Dendritic cell treated with granulocyte-macrophage colony-stimulating factor and Interleukin-4, amounts not matched to agents 40 ng/mL and 50 ng/mL, for 4 days (primary cell): ENCODE measurements at regions of chr3 and their contacts with region 1.

Region 1: DNA sequence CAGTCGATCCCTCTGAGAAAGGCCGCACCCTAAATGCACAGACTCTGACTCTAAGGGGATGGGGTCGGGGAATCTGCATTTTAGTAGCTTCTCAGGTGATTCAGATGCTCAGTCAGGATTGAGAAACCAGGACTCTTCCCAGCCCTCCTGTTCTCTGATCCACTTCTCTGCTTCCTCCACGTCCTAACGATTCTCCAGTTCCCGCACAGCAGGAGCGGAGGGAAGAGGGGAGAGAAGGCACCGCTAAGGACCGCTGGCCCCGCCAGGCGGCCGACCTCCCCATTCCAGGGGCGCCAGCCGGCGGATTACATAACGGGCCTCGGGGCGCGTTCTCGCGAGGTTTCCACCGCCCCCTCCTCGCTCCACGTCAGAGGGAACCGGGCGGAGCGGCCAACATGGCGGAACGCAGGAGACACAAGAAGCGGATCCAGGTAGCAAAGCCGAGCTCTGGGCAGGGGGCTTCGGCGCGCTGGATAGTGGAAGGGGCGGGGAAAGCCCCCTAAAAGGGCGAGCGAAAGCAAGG is at the start of gene SEC62:
- H3K4me3 Mint-ChIP-seq: peak within 1 kb of the TSS; percentile 92
- H3K27ac Mint-ChIP-seq: peak within 1 kb of the TSS; percentile 96
- H3K4me1 Mint-ChIP-seq: peaks cover 44% of the 10 kb centered on the region
- H3K27me3 Mint-ChIP-seq: peaks cover 3% of the 10 kb centered on the region

Region 2: DNA sequence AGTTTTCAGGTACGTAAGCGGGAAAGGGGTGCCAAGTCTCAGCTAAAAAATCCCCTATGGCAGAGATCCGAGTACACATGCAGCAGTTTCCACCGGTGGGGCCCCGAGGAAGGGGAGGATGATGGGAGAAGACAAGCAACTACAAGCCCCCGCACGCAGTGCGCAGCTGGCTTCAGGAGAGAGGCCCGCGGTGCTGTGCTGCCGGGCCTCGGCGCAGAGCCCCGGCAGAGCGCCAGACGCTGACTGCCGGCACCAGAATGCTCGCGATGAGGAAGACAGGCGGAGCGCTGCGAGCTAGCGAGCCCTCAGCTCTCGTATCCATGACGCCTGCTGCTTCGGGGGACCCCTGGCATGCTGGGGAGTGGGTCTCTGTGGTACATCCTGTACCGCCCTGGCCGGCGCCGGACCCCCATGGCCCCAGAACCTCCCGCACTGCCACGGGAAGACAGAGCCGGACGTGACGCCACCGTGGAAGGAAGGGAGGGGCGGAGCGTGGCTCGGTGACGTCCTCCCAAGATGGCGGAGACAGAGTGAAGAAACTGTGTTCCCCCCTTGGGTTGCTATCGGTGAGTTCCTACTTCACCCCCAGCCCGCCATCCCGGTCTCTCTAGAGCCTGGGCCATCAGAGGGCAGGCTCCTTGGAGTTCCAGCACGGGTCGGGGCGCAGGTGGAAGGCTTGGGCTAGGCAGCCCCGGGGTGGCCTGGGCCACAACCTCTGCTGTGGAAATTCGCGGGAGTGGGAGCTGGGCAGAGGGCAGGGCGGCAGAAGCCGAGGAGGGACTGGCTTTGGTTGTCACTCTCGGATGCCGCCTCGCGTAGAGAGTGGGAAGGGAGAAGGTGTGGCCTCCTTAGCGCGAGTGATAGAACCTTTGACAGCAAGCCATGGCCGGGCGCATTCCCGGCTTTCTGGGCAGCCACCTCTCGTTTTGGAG is 193.3 kb before region 1 on chr3 and contains the start of gene MYNN:
- intact Hi-C with region 1: loop called (anchors 5 kb)
- H3K4me3 Mint-ChIP-seq: peak within 1 kb of the TSS; percentile 93
- H3K27ac Mint-ChIP-seq: peak within 1 kb of the TSS; percentile 99
- H3K4me1 Mint-ChIP-seq: peaks cover 14% of the 10 kb centered on the region
- H3K27me3 Mint-ChIP-seq: no peaks in the 10 kb centered on the region

Region 3: DNA sequence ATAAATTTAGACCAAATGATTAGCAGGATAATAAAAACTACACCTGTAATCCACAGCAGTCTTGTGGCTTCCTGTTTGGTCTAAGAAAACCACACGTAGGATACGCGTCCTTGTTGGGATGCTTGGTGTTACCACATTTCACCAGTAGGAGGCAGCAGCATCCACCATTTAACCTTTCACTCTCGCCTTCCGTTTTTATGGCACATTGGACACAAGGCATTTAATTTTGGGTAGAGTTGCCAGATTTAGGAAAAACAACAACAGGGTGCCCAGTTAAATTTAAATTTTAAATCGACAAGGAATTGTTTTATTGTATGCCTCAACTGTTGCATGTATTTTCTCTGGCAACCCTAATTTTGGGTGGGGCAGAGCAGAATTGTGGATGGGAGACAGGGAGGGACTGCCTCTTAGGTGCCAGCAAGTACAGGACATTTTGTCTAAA is 103.0 kb before region 1 on chr3:
- intact Hi-C with region 1: loop called (anchors 2 kb)
- H3K4me3 Mint-ChIP-seq: no peak overlapping the region
- H3K27ac Mint-ChIP-seq: no peak overlapping the region
- H3K4me1 Mint-ChIP-seq: peaks cover 11% of the 10 kb centered on the region
- H3K27me3 Mint-ChIP-seq: peaks cover 9% of the 10 kb centered on the region

Region 4: GRCh38 chr3:170037463-170038433 is 71.3 kb after region 1 on chr3 and contains the start of gene GPR160:
- intact Hi-C with region 1: loop called (anchors 5 kb)
- H3K4me3 Mint-ChIP-seq: peak within 1 kb of the TSS; percentile 85
- H3K27ac Mint-ChIP-seq: peak within 1 kb of the TSS; percentile 78
- H3K4me1 Mint-ChIP-seq: peaks cover 47% of the 10 kb centered on the region
- H3K27me3 Mint-ChIP-seq: no peaks in the 10 kb centered on the region

Region 5: GRCh38 chr3:170244578-170244977 is 278.1 kb after region 1 on chr3:
- intact Hi-C with region 1: no loop called
- H3K4me3 Mint-ChIP-seq: no peak overlapping the region
- H3K27ac Mint-ChIP-seq: no peak overlapping the region
- H3K4me1 Mint-ChIP-seq: no peaks in the 10 kb centered on the region
- H3K27me3 Mint-ChIP-seq: no peaks in the 10 kb centered on the region

Region 6: DNA sequence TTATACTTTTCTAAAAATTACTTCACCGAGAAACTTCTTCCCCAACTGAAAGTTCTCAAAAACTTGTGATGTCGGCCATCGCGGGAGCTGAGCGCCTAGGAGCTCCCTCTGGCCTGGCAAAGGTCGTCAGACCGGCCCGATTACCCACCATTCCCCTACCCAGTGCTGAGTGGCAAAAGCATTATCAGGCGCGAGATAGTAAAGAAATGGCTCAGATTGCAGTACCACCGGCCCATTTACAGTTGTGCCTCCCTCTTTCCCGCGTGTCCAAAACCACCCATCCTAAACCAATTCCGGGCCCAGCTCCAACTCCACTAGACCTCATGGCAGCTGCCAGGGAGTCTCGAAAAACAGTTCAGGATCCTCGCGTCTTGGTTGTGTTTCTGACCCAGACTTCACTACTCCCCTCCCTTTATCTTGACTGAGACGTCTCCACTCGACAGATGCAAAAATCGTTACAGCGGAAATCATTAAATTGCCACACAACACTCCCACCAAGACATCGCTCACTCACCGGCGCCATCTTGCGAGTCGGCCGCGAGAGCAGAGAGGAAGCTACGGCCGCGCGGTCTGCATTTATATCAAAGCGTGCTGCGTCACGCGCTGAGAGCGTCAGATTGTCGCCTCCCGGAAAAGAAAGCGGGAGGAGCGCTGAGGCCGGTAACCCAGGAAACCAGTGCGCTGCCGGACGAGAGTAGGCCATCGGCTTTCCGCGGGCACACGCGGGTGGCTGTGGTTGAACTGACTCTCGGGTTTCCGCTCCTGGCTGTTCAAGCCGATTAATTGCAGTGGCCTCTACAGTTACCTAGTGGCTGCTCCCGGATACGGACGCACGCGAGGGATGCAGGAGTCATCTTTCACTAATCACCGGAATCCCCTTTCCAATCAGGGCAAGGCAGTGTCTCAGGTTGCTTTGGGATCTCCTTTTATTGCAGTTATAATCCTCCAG is 903.4 kb after region 1 on chr3 and contains the start of gene RPL22L1:
- intact Hi-C with region 1: loop called (anchors 10 kb)
- H3K4me3 Mint-ChIP-seq: peak within 1 kb of the TSS; percentile 96
- H3K27ac Mint-ChIP-seq: peak within 1 kb of the TSS; percentile 99
- H3K4me1 Mint-ChIP-seq: peaks cover 9% of the 10 kb centered on the region
- H3K27me3 Mint-ChIP-seq: no peaks in the 10 kb centered on the region